WTC11 (cell line): ENCODE measurements at regions of chr11 and their contacts with region 1.

Region 1: DNA sequence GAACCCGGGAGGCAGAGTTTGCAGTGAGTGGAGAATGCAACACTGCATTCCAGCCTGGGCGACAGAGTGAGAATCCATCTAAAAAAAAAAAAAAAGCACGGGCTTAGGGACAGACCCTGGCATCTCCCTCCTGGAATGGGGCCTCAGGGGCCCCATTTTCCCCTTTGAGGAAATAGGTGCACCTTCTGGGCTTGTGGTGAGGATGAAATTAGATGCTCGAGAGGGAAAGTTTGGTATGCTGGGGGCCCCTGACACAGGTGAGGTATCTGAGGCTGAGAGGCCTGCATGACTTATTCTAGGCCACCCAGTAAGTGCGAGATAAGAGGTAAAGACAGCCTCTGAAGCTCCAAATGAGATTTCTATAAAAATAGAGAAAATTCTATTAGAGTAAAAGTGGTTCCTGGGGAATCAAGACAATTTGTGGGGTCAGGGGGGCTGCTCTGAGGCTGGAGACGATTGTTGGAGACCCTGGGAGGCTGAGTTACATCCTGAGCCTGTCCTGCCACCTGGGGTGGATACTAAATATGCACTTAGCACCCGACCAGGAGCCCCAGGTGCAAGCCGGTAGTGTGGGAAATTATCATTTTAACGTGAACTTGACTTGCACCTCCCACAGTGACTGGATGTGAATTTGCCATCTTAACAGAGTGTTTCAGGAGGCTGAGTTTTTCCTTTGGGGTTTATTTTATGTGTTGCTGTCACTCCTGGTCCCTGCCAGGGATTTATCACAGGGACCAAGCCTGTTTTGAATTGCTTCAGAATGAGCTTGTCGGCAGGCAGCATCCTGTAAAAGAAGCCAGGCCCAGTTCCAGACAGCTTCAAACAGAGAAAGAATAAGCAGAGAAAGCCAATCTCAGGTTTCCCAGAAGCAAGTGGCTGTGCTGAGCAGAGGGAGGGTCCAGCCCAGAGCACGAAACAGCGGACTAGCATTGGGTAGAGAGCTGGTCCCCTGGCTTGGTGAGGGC is 48.4 kb upstream of the TSKU start:
- DNase-seq: no peak
- ATAC-seq: peak; percentile 9
- H3K4me3 Mint-ChIP-seq: no peak overlapping the region
- H3K27ac Mint-ChIP-seq: peak overlapping the region; percentile 67; the same call in 1 of the 2 replicates
- H3K4me1 Mint-ChIP-seq: peaks cover 33% of the 10 kb centered on the region
- H3K27me3 Mint-ChIP-seq: peaks cover 2% of the 10 kb centered on the region; the same call in 1 of the 2 replicates
- CTCF ChIP-seq: no peak

Region 2: GRCh38 chr11:76721755-76722677 is 12.7 kb before region 1 on chr11:
- CTCF ChIA-PET with region 1: interaction called, 75 read pairs
- POLR2A ChIA-PET with region 1: no interaction called
- DNase-seq: peak; percentile 88
- ATAC-seq: peak; percentile 94
- H3K4me3 Mint-ChIP-seq: peak overlapping the region; percentile 39
- H3K27ac Mint-ChIP-seq: no peak overlapping the region
- H3K4me1 Mint-ChIP-seq: peaks cover 5% of the 10 kb centered on the region
- H3K27me3 Mint-ChIP-seq: peaks cover 22% of the 10 kb centered on the region
- CTCF ChIP-seq: peak; percentile 79

Region 3: DNA sequence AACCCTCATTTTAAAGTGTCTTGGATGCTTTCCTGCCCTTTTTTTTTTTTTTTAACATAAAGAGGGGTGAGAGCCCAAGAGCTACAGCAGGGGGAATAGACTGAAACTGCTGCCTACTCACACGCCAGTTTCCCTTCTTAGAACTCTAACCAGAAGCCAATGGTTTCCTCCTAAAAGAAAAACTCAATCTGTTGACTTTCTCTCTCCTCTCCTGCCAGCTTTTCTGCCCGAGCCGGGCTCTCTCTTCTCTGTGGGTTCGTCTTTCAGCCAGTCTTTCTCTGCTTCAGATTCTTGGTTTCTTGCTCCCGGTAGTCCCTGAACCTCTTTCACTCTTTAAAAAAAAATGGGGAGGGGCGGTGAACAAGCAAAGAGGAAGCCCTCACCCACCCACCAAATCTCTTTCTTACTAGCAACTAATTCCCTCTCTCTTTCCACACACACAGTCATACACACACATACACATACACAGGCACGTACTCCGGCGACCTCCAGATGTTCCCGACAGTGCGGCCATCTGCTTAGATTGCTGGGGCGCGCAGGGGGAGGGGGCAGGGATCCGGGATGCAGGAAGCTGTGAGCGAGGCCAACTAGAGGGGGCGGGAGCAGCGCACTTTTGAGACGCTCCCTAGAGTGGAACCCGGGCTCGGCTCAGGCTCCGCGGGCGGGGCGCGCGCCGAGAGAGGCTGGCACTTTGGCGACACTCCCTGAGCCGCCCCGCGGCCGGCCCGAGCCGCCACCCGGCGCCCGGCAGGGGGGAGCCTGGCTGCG is 48.0 kb after region 1 on chr11:
- CTCF ChIA-PET with region 1: interaction called, 27 read pairs
- POLR2A ChIA-PET with region 1: interaction called, 4 read pairs
- DNase-seq: peak; percentile 95
- ATAC-seq: peak; percentile 57
- H3K4me3 Mint-ChIP-seq: peak overlapping the region; percentile 84
- H3K27ac Mint-ChIP-seq: peak overlapping the region; percentile 88
- H3K4me1 Mint-ChIP-seq: peaks cover 64% of the 10 kb centered on the region
- H3K27me3 Mint-ChIP-seq: peaks cover 15% of the 10 kb centered on the region
- CTCF ChIP-seq: no peak

Region 4: GRCh38 chr11:76799066-76799804 is 64.5 kb after region 1 on chr11:
- CTCF ChIA-PET with region 1: interaction called, 135 read pairs
- POLR2A ChIA-PET with region 1: interaction called, 3 read pairs
- DNase-seq: peak; percentile 92
- ATAC-seq: peak; percentile 90
- H3K4me3 Mint-ChIP-seq: peak overlapping the region; percentile 55
- H3K27ac Mint-ChIP-seq: no peak overlapping the region
- H3K4me1 Mint-ChIP-seq: peaks cover 18% of the 10 kb centered on the region
- H3K27me3 Mint-ChIP-seq: no peaks in the 10 kb centered on the region
- CTCF ChIP-seq: peak; percentile 84

Region 5: DNA sequence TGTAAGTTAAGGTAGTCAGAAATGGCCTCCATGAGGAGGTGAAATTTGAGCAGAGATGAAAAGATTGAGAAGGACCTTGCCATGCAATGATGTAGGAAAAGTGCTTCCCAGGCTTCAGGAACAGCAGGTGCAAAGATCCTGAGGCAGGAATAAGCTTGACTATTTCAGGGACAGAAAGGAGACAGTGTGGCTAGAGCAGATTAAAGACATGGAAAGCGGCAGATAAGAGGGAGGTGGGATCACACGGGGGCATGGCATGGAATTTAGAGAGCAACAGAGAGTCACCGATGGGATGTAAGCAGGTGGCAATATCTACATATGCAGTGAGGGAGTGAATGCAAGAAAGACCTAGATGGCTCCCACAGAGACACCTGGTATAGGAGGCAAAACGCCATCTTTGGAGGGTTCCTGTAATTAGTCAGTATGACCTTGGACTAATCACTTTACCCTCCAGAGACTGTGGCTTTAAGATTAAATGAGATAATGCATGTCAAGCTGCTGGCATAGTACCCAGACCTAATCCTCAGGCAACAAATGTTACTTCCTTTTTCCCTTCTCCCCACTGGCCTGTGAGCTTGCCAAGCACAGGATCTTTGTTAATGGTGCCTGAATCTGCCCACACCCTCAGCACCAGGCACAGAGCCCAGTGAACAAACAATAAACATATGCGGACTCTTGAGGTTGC is 101.3 kb after region 1 on chr11:
- CTCF ChIA-PET with region 1: interaction called, 28 read pairs
- POLR2A ChIA-PET with region 1: no interaction called
- DNase-seq: no peak
- ATAC-seq: no peak
- H3K4me3 Mint-ChIP-seq: no peak overlapping the region
- H3K27ac Mint-ChIP-seq: no peak overlapping the region
- H3K4me1 Mint-ChIP-seq: peaks cover 10% of the 10 kb centered on the region
- H3K27me3 Mint-ChIP-seq: no peaks in the 10 kb centered on the region
- CTCF ChIP-seq: no peak

Region 6: DNA sequence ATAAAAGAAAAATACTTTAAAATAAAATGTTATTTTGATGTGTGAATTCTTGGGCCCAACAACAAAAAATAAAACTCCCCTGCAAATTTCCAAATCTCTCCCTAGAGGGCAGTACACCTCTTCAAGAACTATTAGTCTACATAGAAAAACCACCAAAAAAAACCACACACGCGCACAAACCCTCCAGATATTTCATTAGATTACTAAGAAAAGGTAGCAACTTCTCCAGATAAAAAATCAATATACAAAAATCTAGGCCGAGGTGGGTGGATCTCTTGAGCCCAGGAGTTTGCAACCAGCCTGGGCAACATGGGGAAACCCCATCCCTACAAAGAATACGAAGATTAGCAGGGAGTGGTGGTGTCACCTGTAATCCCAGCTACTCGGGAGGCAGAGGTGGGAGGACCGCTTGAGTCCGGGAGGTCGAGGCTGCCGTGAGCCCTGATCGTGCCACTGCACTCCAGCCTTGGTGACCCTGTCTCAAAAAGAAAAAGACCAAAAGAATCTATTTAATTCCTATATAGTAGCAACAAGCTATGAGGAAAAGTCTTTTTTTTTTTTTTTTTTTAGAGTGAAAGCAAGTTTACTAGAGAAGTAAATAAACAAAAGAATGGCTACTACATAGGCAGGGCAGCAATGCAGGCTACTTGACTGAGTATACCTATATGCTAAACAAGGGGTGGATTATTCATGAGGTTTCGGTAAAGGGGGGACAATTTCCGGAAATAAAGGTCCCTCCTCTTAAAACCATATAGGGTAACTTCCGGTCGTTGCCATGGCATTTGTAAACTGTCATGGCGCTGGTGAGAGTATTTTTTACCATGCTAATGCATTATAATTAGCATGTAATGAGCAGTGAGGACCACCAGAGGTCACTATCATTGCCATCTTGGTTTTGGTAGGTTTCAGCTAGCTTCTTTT is 312.5 kb after region 1 on chr11:
- CTCF ChIA-PET with region 1: interaction called, 14 read pairs
- POLR2A ChIA-PET with region 1: no interaction called
- DNase-seq: peak; percentile 61
- ATAC-seq: peak; percentile 80
- H3K4me3 Mint-ChIP-seq: peak overlapping the region; percentile 51
- H3K27ac Mint-ChIP-seq: peak overlapping the region; percentile 52
- H3K4me1 Mint-ChIP-seq: peaks cover 14% of the 10 kb centered on the region
- H3K27me3 Mint-ChIP-seq: peaks cover 16% of the 10 kb centered on the region
- CTCF ChIP-seq: no peak